MCF 10A (cell line): ENCODE measurements at regions of chr4 and their contacts with region 1.

Region 1: DNA sequence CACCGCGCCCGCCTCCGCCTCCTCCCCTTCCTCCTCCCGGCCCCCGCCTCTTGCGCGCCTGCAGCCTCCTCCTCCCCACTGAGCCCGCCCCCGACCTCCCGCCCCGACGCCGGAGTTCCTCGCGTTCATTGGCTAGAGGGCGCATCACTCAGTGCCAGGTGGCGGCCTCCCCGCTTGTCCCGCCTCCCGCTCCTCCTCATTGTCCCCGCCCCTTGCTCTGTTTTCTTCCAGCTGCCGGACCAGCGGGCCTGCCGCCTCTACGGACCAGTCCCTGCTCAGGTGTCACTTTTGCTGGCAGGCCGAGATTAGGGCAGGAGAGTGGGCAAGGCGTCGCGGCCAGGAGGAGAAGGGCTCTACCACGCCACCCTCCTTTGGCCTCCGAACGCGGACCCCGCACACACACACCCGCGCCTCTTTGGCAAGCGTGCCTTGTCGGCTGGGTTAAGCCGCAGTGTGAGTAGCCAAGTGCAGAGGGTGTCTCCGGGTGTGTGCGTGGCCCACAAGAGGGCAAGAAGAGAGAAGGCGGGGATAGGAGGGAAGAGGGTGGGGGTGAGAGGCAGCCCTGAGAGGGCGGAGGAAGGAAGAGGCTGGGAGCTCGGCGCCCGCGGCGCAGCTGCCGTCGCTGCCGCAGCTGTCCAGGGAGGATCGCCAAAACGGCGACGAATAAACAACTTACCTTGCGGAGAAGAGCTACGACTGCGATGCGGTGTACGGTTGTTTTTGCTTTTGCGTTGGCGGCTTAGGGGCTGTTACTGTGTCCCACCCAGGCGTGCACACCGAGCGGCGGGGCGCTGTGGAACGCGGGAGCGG is 436 bp upstream of the PPP3CA start:
- DNase-seq: peak; percentile 97
- H3K4me3 Mint-ChIP-seq: peak overlapping the region; percentile 90
- H3K27ac Mint-ChIP-seq: peak overlapping the region; percentile 96
- H3K4me1 Mint-ChIP-seq: peaks cover 33% of the 10 kb centered on the region
- H3K27me3 Mint-ChIP-seq: no peaks in the 10 kb centered on the region
- CTCF ChIP-seq: no peak

Region 2: DNA sequence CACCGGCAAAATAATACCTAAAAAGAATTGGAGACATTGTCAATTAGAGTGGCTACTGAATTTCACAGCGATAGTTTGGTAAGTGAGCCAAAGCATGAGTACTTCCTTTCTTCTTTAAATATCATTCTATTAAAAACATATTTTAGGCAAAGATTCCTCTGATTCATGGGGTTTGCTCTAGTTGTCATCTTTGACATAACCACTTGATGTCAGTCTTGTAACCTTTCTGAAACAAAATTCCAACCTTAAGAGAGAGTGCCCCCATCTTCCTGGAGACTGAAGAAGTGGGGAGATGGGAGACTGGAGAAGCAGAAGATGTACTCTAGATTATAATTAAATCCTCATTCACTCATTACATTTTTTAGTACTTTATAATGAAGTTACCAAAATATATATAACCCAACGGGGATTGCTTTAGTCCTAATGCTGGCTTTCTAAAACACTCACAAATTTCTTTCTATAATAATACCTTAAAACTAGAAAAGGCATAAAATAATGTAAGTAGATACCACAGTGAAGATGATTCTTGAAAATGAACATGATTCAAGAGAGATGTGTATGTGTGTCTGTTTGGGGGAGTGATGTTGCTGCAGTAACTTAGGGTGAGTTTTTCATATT is 926.3 kb before region 1 on chr4:
- CTCF ChIA-PET with region 1: no interaction called
- POLR2A ChIA-PET with region 1: no interaction called
- intact Hi-C with region 1: loop called (anchors 5 kb)
- DNase-seq: peak; percentile 58
- H3K4me3 Mint-ChIP-seq: no peak overlapping the region
- H3K27ac Mint-ChIP-seq: peak overlapping the region; percentile 80
- H3K4me1 Mint-ChIP-seq: peaks cover 12% of the 10 kb centered on the region
- H3K27me3 Mint-ChIP-seq: no peaks in the 10 kb centered on the region
- CTCF ChIP-seq: peak; percentile 69

Region 3: GRCh38 chr4:101086801-101087586 is 260.8 kb before region 1 on chr4:
- CTCF ChIA-PET with region 1: interaction called, 3 read pairs
- POLR2A ChIA-PET with region 1: no interaction called
- intact Hi-C with region 1: loop called (anchors 10 kb)
- DNase-seq: peak; percentile 18
- H3K4me3 Mint-ChIP-seq: no peak overlapping the region
- H3K27ac Mint-ChIP-seq: no peak overlapping the region
- H3K4me1 Mint-ChIP-seq: peaks cover 14% of the 10 kb centered on the region
- H3K27me3 Mint-ChIP-seq: no peaks in the 10 kb centered on the region
- CTCF ChIP-seq: peak; percentile 17

Region 4: DNA sequence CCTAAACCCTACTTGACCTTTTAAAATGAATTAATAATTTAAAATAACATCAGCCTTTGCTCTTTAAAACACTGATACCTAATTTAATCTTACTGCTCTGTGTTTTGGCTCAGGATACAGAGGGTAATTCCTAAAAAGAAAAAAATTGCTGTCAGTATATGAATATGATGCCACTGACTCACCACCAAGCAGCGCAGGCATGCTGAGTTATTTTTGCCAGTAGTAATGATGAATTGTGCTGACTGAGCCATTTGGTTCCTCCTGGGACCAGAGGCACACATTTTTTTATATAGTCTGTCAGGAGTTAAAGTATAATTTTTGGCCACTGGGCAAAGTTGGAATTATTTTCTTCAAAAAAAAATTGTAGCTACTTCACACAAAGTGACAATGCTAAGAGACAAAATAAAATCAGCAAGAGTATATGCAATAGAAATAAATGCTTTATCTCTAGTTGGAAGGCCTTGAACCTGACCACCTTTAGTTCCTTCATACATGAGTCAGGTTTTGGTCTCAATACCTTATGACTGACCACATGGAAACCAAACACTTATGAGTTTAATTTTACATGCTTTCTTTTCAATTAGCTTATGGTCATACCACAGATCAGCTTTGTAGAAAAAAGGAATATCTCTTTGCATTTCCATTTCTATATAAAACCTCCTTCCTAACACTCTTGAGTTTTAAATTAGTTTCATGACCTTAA is 115.5 kb before region 1 on chr4:
- CTCF ChIA-PET with region 1: no interaction called
- POLR2A ChIA-PET with region 1: interaction called, 36 read pairs
- intact Hi-C with region 1: loop called (anchors 5 kb)
- DNase-seq: peak; percentile 83
- H3K4me3 Mint-ChIP-seq: no peak overlapping the region
- H3K27ac Mint-ChIP-seq: peak overlapping the region; percentile 60
- H3K4me1 Mint-ChIP-seq: peaks cover 37% of the 10 kb centered on the region
- H3K27me3 Mint-ChIP-seq: no peaks in the 10 kb centered on the region
- CTCF ChIP-seq: no peak

Region 5: GRCh38 chr4:101393250-101393649 is 45.5 kb after region 1 on chr4:
- CTCF ChIA-PET with region 1: no interaction called
- POLR2A ChIA-PET with region 1: interaction called, 14 read pairs
- intact Hi-C with region 1: no loop called
- DNase-seq: peak; percentile 85
- H3K4me3 Mint-ChIP-seq: no peak overlapping the region
- H3K27ac Mint-ChIP-seq: peak overlapping the region; percentile 76
- H3K4me1 Mint-ChIP-seq: no peaks in the 10 kb centered on the region
- H3K27me3 Mint-ChIP-seq: no peaks in the 10 kb centered on the region
- CTCF ChIP-seq: no peak

Region 6: DNA sequence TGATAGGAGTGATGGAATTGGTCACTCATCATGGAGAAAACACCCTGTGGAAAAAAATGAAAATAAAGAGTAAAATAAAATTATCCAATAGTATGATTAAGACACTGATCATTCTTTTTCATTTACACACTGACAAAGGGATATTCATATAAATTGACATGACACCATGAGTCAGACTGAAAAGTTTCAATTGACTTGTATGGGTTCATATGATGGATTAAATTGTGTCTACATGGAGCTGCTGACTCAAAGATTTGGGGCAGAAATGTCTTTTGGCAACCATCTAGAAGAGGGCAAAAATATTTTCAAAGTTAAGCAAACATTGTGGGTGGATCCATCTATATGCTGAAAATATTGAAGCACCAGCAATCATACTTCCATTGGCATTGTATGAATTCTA is 153.0 kb after region 1 on chr4:
- CTCF ChIA-PET with region 1: no interaction called
- POLR2A ChIA-PET with region 1: no interaction called
- intact Hi-C with region 1: no loop called
- DNase-seq: no peak
- H3K4me3 Mint-ChIP-seq: no peak overlapping the region
- H3K27ac Mint-ChIP-seq: no peak overlapping the region
- H3K4me1 Mint-ChIP-seq: no peaks in the 10 kb centered on the region
- H3K27me3 Mint-ChIP-seq: no peaks in the 10 kb centered on the region
- CTCF ChIP-seq: no peak

Region 7: GRCh38 chr4:102263011-102263787 is 915.4 kb after region 1 on chr4:
- CTCF ChIA-PET with region 1: interaction called, 4 read pairs
- POLR2A ChIA-PET with region 1: interaction called, 3 read pairs
- intact Hi-C with region 1: loop called (anchors 2 kb)
- DNase-seq: peak; percentile 58
- H3K4me3 Mint-ChIP-seq: no peak overlapping the region
- H3K27ac Mint-ChIP-seq: no peak overlapping the region
- H3K4me1 Mint-ChIP-seq: peaks cover 7% of the 10 kb centered on the region
- H3K27me3 Mint-ChIP-seq: no peaks in the 10 kb centered on the region
- CTCF ChIP-seq: peak; percentile 67